Transverse colon (tissue), 4 donors: ENCODE measurements at regions of chr2 and their contacts with region 1.

Region 1: GRCh38 chr2:178365116-178365515 is 85.9 kb downstream of the PRKRA start:
- DNase-seq: no peak
- H3K4me3 ChIP-seq: no peak overlapping the region
- H3K27ac ChIP-seq: no peak overlapping the region
- H3K4me1 ChIP-seq: no peaks in the 10 kb centered on the region
- H3K27me3 ChIP-seq: no peaks in the 10 kb centered on the region
- CTCF ChIP-seq: no peak
- EP300 ChIP-seq: no peak
- POLR2A ChIP-seq: no peak

Region 2: GRCh38 chr2:178345951-178346350 is 19.2 kb before region 1 on chr2:
- in situ Hi-C with region 1: no loop called
- intact Hi-C with region 1: loop called (anchors 1 kb)
- DNase-seq: no peak
- H3K4me3 ChIP-seq: no peak overlapping the region
- H3K27ac ChIP-seq: no peak overlapping the region
- H3K4me1 ChIP-seq: no peaks in the 10 kb centered on the region
- H3K27me3 ChIP-seq: no peaks in the 10 kb centered on the region
- CTCF ChIP-seq: no peak
- EP300 ChIP-seq: no peak
- POLR2A ChIP-seq: no peak